ENCODE measurements at regions of chr7 and their contacts with region 1.

Region 1: DNA sequence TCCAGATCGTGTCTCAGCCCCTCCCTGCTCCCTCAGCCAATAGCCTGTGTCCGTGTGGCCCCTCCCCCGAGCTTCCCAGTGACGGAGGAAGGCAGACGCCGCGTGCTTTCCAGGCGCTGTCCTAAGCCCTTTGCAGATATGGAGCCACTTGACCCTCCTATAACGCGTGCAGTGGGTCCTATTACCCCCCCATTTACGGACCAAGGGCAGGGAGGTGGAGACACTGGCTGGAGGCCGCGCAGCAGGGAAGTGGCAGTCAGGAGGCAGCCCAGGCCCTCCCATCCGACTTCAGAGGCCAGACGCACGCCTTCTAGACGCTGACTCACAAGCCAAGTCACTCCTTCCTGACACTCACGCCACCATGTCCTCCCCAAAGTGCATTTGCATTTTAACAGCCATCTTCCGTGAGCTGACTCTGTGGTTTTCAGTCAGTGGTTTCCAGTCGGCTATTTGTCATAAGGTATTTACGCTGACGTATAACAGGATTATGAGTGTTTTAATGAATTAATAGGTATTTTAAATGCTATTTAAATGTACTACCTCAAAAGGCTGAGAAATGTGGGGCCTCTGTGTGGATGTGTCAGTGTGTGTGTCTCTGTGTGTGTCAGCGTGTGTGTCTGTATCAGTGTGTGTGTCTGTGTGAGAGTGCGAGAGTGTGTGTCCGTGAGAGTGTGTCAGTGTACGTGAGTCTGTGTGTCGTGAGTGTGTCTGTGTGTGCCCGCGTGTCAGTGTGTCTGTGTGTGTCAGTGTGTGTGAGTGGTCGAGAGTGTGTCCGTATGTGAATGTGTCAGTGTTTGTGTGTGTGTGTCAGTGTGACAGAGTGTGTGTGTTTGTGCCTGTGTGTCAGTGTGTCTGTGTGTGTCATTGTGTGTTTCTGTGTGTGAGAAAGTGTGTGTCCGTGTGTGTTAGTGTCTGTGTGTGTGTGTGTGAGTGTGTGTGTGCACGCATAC is 92.0 kb upstream of the INSIG1 start:
- DNase-seq: peak; percentile 83 to 96
- ATAC-seq: peak; percentile 82 to 93 (median 88)
- H3K4me3 ChIP-seq: peak overlapping the region; percentile 37
- H3K4me3 Mint-ChIP-seq: peak overlapping the region; percentile 96
- H3K27ac ChIP-seq: peak overlapping the region; percentile 93
- H3K27ac Mint-ChIP-seq: peak overlapping the region; percentile 96 to 98
- H3K4me1 ChIP-seq: peaks cover 25% of the 10 kb centered on the region
- H3K4me1 Mint-ChIP-seq: peaks cover 21 to 35% of the 10 kb centered on the region in 2 donors
- H3K27me3 ChIP-seq: no peaks in the 10 kb centered on the region
- H3K27me3 Mint-ChIP-seq: peaks cover 0 to 4% of the 10 kb centered on the region in 2 donors
- CTCF ChIP-seq: no peak

Region 2: DNA sequence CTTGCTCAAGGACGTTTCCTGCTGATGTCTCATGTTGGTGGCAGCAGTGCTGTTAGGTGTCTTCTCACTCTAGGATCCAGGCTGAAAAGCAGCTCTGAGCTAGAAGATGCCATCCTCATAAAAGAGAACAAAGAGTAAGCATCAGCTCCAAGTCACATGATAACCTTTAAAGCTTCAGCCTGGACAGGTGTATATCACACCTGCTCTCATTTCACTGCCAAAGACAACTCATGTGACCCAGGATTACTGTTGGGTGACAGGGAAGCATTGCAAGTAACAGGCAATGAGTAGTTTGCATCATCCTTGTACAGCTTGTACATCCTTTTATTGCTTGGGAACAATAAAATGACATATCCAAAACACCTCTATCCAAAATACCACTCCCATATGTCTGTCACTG is 1576.8 kb before region 1 on chr7:
- intact Hi-C with region 1: no loop called
- DNase-seq: no peak
- ATAC-seq: no peak
- H3K4me3 ChIP-seq: no peak overlapping the region
- H3K4me3 Mint-ChIP-seq: no peak overlapping the region
- H3K27ac ChIP-seq: no peak overlapping the region
- H3K27ac Mint-ChIP-seq: no peak overlapping the region
- H3K4me1 ChIP-seq: no peaks in the 10 kb centered on the region
- H3K4me1 Mint-ChIP-seq: no peaks in the 10 kb centered on the region
- H3K27me3 ChIP-seq: no peaks in the 10 kb centered on the region
- H3K27me3 Mint-ChIP-seq: no peaks in the 10 kb centered on the region
- CTCF ChIP-seq: no peak

Region 3: GRCh38 chr7:155003376-155004214 is 202.0 kb before region 1 on chr7:
- intact Hi-C with region 1: loop called (anchors 5 kb)
- DNase-seq: peak; percentile 83 to 91
- ATAC-seq: peak; percentile 89 to 94 (median 89)
- H3K4me3 ChIP-seq: peak overlapping the region; percentile 96
- H3K4me3 Mint-ChIP-seq: peak overlapping the region; percentile 89
- H3K27ac ChIP-seq: peak overlapping the region; percentile 67
- H3K27ac Mint-ChIP-seq: peak overlapping the region; percentile 73 to 81
- H3K4me1 ChIP-seq: peaks cover 14% of the 10 kb centered on the region
- H3K4me1 Mint-ChIP-seq: peaks cover 5 to 12% of the 10 kb centered on the region in 2 donors
- H3K27me3 ChIP-seq: no peaks in the 10 kb centered on the region
- H3K27me3 Mint-ChIP-seq: no peaks in the 10 kb centered on the region
- CTCF ChIP-seq: no peak

Region 4: GRCh38 chr7:155338632-155339320 is 133.1 kb after region 1 on chr7:
- intact Hi-C with region 1: loop called (anchors 5 kb)
- DNase-seq: peak; percentile 23 to 72
- ATAC-seq: peak; percentile 69 to 84 (median 83)
- H3K4me3 ChIP-seq: no peak overlapping the region
- H3K4me3 Mint-ChIP-seq: peak overlapping the region; percentile 56
- H3K27ac ChIP-seq: no peak overlapping the region
- H3K27ac Mint-ChIP-seq: peak overlapping the region in 1 of 2 donors; percentile 59
- H3K4me1 ChIP-seq: peaks cover 16% of the 10 kb centered on the region
- H3K4me1 Mint-ChIP-seq: peaks cover 4 to 23% of the 10 kb centered on the region in 2 donors
- H3K27me3 ChIP-seq: peaks cover 3% of the 10 kb centered on the region
- H3K27me3 Mint-ChIP-seq: peaks cover 7 to 16% of the 10 kb centered on the region in 2 donors
- CTCF ChIP-seq: no peak

Region 5: GRCh38 chr7:155713384-155713783 is 507.7 kb after region 1 on chr7:
- intact Hi-C with region 1: no loop called
- DNase-seq: no peak
- ATAC-seq: peak in 2 of 3 donors; percentile 42 to 51
- H3K4me3 ChIP-seq: no peak overlapping the region
- H3K4me3 Mint-ChIP-seq: no peak overlapping the region
- H3K27ac ChIP-seq: no peak overlapping the region
- H3K27ac Mint-ChIP-seq: peak overlapping the region; percentile 34 to 80
- H3K4me1 ChIP-seq: peaks cover 12% of the 10 kb centered on the region
- H3K4me1 Mint-ChIP-seq: peaks cover 35 to 49% of the 10 kb centered on the region in 2 donors
- H3K27me3 ChIP-seq: no peaks in the 10 kb centered on the region
- H3K27me3 Mint-ChIP-seq: no peaks in the 10 kb centered on the region
- CTCF ChIP-seq: no peak

Measured in natural killer cell (primary cell).